ENCODE measurements at regions of chr12 and their contacts with region 1.

Region 1: GRCh38 chr12:117155278-117156060 is 34.8 kb downstream of the FBXO21 start:
- DNase-seq: peak in 3 of 4 donors; percentile 46 to 87 (median 56)
- ATAC-seq: peak; percentile 90
- H3K4me3 ChIP-seq: no peak overlapping the region
- H3K27ac ChIP-seq: no peak overlapping the region
- H3K4me1 ChIP-seq: peaks cover 5 to 6% of the 10 kb centered on the region in 2 donors
- H3K27me3 ChIP-seq: no peaks in the 10 kb centered on the region
- CTCF ChIP-seq: peak; percentile 61 to 76

Region 2: DNA sequence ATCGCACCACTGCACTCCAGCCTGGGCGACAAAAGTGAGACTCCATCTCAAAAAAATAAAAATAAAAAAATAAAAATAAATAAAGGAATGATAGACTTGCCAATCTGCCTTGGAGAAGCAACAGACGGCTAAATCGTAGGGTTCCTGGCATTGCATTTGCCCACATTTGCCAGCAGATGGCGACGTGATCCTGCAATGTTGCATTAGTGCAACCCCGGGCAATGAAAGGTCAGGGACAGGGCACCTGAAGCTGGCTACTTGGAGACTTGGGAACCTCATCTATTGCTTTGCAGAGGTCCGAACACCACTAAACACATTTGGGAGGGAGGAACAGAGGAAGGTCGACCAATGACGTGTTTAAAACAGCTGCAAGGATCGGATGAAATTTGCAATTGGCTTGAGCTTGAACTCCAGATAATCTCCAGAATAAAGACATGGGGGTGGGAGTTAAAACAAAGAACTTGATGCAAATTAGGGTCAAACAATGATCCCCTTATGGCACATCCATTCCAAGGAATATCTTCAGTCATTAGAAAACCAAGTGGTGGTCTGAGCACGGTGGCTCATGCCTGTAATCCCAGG is 452.2 kb before region 1 on chr12:
- intact Hi-C with region 1: loop called in 1 of 2 experiments (anchors 10 kb)
- DNase-seq: peak in 2 of 4 donors; percentile 60 to 64
- ATAC-seq: peak; percentile 94
- H3K4me3 ChIP-seq: no peak overlapping the region
- H3K27ac ChIP-seq: no peak overlapping the region
- H3K4me1 ChIP-seq: peaks cover 0 to 6% of the 10 kb centered on the region in 2 donors
- H3K27me3 ChIP-seq: no peaks in the 10 kb centered on the region
- CTCF ChIP-seq: peak; percentile 92 to 93

Region 3: DNA sequence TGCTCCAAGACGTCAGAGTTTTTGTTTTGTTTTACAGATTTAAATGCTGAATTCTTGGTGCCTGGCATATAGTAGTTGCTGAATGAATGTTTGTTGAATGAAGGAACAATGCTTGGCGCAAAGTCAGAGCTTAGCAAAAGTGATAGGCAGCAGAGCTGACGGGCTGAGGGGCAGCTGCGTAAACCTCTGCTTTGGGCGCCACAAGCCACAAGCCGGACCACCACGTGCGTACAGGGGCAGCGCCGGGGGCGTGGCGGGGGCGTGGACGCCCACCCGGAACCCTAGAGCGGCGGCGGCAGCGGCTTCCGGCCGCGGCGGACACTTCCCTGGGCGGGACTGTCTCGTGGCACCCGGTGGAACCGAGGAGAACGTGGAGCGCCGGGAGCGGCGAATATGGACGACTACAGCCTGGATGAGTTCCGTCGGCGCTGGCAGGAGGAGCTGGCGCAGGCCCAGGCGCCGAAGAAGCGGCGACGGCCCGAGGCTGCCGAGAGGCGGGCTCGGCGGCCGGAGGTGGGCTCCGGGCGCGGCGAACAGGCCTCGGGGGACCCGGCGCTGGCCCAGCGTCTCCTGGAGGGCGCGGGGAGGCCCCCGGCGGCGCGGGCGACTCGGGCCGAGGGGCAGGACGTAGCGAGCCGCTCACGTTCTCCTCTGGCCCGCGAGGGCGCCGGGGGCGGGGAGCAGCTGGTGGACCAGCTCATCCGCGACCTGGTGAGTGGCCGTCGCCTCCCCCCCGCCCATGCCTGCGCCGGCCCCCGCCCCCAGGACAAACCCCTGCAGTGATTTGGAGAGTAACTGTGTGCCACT is 244.6 kb before region 1 on chr12 and contains the start of gene FBXW8:
- intact Hi-C with region 1: no loop called
- DNase-seq: peak; percentile 63 to 93 (median 77)
- ATAC-seq: peak; percentile 95
- H3K4me3 ChIP-seq: peak within 1 kb of the TSS; percentile 82 to 88
- H3K27ac ChIP-seq: peak within 1 kb of the TSS; percentile 77 to 79
- H3K4me1 ChIP-seq: peaks cover 4 to 21% of the 10 kb centered on the region in 2 donors
- H3K27me3 ChIP-seq: no peaks in the 10 kb centered on the region
- CTCF ChIP-seq: no peak
- polyA plus RNA-seq, gene FBXW8: 22.4 to 28.4 (median 26.3) TPM

Region 4: GRCh38 chr12:117284140-117284539 is 128.7 kb after region 1 on chr12:
- intact Hi-C with region 1: no loop called
- DNase-seq: peak in 1 of 4 donors; percentile 73
- ATAC-seq: no peak
- H3K4me3 ChIP-seq: no peak overlapping the region
- H3K27ac ChIP-seq: no peak overlapping the region
- H3K4me1 ChIP-seq: no peaks in the 10 kb centered on the region
- H3K27me3 ChIP-seq: peaks cover 0 to 13% of the 10 kb centered on the region in 2 donors
- CTCF ChIP-seq: no peak

Measured in left lung (tissue), 14 donors.